ENCODE measurements at regions of chr20 and their contacts with region 1.

Region 1: DNA sequence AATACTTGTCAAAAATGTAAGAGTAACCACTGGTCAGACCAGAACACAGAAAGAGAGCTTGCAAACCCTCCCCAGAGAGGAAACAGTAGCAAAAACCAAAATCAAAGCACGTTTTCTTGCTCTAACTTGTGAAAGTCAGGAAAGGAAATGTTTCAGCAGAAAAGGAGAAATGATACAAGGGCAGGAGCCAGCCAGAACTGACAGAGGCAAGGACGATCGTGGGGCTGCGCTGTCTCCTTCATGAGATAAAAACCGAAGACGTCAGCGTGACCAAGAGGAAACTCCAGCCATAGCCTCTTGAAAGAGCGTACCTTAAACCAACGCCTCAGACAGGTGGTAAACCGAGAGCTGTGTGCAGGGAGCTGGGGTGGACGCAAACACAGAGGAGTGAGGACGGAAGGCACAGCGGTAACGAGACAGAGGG is 27.5 kb downstream of the LAMA5 start:
- DNase-seq: peak in 1 of 35 experiments; percentile 15
- ATAC-seq: no peak
- H3K4me3 ChIP-seq: no peak overlapping the region
- H3K4me3 Mint-ChIP-seq: peak overlapping the region in 1 of 3 donors; percentile 18
- H3K27ac ChIP-seq: no peak overlapping the region
- H3K27ac Mint-ChIP-seq: no peak overlapping the region
- H3K4me1 ChIP-seq: no peaks in the 10 kb centered on the region
- H3K4me1 Mint-ChIP-seq: peaks cover 0 to 15% (median 0%) of the 10 kb centered on the region in 3 donors
- H3K27me3 ChIP-seq: peaks cover 0 to 37% of the 10 kb centered on the region in 2 experiments
- H3K27me3 Mint-ChIP-seq: peaks cover 9 to 14% of the 10 kb centered on the region in 2 donors

Region 2: GRCh38 chr20:61983965-61984830 is 355.5 kb before region 1 on chr20:
- CTCF ChIA-PET with region 1: no interaction called
- POLR2A ChIA-PET with region 1: interaction called in 1 of 2 experiments, 10 read pairs
- DNase-seq: no peak
- ATAC-seq: no peak
- H3K4me3 ChIP-seq: no peak overlapping the region
- H3K4me3 Mint-ChIP-seq: no peak overlapping the region
- H3K27ac ChIP-seq: no peak overlapping the region
- H3K27ac Mint-ChIP-seq: no peak overlapping the region
- H3K4me1 ChIP-seq: peaks cover 0 to 47% of the 10 kb centered on the region in 2 experiments
- H3K4me1 Mint-ChIP-seq: peaks cover 24 to 34% (median 26%) of the 10 kb centered on the region in 3 donors
- H3K27me3 ChIP-seq: no peaks in the 10 kb centered on the region
- H3K27me3 Mint-ChIP-seq: no peaks in the 10 kb centered on the region